ENCODE measurements at regions of chr10 and their contacts with region 1.

Region 1: DNA sequence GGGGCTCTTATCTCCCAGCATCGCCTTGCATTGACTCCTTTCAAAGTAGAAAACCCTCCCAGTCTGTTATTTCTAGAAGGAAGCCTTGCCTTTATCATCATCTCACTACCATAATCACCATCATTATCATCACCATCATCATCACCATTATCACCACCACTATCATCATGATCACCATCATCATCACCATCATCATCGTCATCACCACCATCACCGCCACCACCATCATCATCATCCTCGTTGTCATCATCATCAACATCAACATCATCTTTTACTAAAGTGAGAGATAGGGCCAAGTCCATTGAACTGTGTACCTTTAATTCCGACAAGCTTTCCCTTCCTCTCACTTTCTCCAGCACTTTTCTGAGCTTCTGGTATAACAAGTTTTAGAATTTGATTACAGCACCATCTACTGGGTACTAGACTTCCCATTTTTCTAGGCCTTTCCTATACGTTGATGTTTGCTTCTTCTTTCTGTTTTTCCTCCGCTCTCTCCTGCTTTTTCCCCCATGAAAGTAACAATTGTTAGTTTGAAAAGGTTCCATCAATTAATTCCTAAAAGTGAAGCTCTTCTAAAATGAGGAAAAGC is 226.4 kb downstream of the BUB3 start:
- DNase-seq: no peak
- ATAC-seq: no peak
- H3K4me3 ChIP-seq: no peak overlapping the region
- H3K27ac ChIP-seq: no peak overlapping the region
- H3K4me1 ChIP-seq: no peaks in the 10 kb centered on the region
- H3K27me3 ChIP-seq: no peaks in the 10 kb centered on the region
- CTCF ChIP-seq: peak; percentile 22 to 59 (median 46); a peak in 4 of 6 replicates
- POLR2A ChIP-seq: no peak
- RAD21 ChIP-seq: peak; percentile 70

Region 2: GRCh38 chr10:123132576-123133477 is 247.8 kb before region 1 on chr10:
- CTCF ChIA-PET with region 1: interaction called, 15 read pairs
- POLR2A ChIA-PET with region 1: no interaction called
- RAD21 ChIA-PET with region 1: no interaction called
- intact Hi-C with region 1: loop called (anchors 2 kb)
- DNase-seq: peak; percentile 81
- ATAC-seq: peak; percentile 95
- H3K4me3 ChIP-seq: peak overlapping the region; percentile 26 to 43
- H3K27ac ChIP-seq: no peak overlapping the region
- H3K4me1 ChIP-seq: peaks cover 0 to 18% of the 10 kb centered on the region in 2 experiments; a peak in 2 of 4 replicates
- H3K27me3 ChIP-seq: no peaks in the 10 kb centered on the region
- CTCF ChIP-seq: peak; percentile 92 to 99 (median 98)
- POLR2A ChIP-seq: no peak
- RAD21 ChIP-seq: peak; percentile 98

Measured in HCT116 (cell line).